ENCODE measurements at regions of chr21 and their contacts with region 1.

Region 1: GRCh38 chr21:38798481-38798882 is 7.2 kb upstream of the ETS2 start:
- DNase-seq: no peak

Region 2: GRCh38 chr21:38743761-38744529 is 54.5 kb before region 1 on chr21:
- intact Hi-C with region 1: loop called in 1 of 2 experiments (anchors 10 kb)
- DNase-seq: no peak

Region 3: DNA sequence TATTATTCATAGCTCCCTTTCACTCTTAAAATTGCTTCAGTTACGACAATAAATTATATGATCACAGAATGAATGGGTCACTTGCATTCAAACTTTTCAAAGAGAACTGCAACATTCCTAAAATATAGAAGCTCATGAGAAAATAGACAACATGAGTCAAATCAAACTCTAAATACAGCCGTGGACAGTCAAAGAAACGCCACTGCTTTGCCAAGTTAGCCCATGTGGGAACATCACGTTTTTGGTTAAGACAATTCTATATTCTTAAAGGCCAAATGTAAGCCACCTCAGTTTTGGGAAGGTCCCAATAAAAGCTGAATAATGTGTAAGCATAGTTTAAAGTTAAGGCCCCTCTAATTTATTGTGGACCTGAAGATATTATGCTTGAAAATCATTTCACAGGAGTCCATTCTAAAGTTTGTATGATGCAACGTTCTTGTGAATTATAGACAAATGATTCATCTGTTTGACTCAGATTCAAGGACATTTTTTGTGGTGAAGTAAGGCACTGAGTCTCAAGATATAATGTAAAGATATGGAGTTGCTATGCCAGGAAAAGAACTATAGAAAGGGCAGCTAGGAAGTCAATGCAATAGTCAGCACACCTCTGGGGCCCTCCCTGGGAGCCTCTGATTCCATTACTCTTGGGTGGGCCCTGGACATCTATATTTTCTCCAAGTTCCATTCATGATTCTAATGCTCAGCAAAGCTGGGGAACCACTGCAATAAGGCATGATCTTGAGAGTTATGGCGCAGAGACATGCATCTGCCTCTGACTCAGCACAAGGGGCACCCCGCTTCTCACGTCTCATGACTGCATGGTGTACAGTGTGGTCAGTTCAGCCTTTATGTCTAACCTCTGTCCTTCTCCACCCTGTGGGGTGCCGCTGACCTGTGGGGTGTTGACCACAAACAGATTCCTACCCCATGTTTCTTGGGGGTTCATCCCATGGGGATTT is 41.1 kb after region 1 on chr21:
- intact Hi-C with region 1: no loop called
- DNase-seq: no peak

Region 4: DNA sequence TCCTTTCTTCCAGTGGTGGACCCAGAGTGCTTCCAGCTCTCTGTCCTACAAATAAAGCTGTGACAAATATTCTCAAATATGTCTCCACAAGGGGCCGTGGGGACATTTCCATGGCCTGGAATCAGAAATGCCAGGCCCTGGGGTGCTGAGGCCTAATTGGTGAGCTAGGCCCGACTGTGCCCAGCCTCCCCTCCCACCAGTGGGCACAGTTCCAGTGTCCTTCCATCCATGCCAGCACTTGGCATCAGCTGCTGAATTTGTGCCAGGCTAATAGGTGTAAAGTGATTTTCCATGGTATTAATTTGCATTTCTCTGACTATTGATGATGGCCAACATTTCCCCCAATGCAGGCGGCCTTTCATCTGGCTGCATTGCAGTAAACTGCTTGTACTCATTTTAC is 765.7 kb after region 1 on chr21:
- intact Hi-C with region 1: no loop called
- DNase-seq: no peak

Measured in posterior vena cava (tissue), 2 donors.